ENCODE measurements at regions of chr2 and their contacts with region 1.

Region 1: GRCh38 chr2:201558665-201559064 is 84.6 kb downstream of the TMEM237 start:
- DNase-seq: no peak
- ATAC-seq: no peak
- H3K4me3 ChIP-seq: no peak overlapping the region
- H3K4me3 Mint-ChIP-seq: no peak overlapping the region
- H3K27ac ChIP-seq: no peak overlapping the region
- H3K27ac Mint-ChIP-seq: no peak overlapping the region
- H3K4me1 ChIP-seq: no peaks in the 10 kb centered on the region
- H3K4me1 Mint-ChIP-seq: no peaks in the 10 kb centered on the region
- H3K27me3 ChIP-seq: no peaks in the 10 kb centered on the region
- H3K27me3 Mint-ChIP-seq: no peaks in the 10 kb centered on the region
- CTCF ChIP-seq: no peak

Region 2: DNA sequence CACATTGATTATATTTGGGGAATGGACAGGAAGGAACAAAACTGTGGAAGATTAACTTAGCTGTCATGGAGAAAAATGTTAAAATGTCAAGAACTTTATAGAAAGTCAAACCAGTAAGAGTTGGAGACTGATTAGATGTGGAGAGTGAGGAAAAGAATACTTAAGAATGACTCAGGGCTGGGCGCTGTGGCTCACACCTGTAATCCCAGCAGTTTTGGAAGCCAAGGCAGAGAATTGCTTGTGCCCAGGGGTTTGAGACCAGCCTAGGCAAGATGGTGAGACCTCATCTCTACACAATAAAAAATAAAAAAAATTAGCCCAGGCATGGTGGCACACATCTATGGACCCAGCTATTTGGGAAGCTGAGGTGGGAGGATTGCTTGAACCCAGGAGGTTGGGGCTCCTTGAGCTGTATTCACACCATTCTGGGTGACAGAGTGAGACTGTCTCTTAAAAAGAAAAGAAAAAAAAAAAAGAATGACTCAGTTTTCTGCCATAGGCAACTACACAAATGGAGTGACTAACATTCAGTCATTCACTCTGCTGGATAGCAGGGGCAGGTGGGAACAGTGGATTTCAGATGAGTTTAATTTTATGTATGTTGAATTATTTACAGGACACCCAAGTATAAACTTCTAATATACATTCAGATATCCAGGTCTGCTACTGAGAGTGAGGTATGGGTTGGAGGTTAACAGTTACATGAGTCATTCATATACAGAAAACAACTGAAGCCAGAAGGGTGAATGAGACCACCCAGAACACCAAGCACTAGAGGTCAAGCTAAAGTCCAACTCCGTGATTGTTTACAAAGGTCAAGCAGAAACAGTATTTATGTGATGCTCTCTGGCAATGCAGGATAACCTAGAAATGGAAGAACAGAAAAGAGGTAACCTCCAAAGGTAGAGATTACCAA is 629.1 kb before region 1 on chr2:
- CTCF ChIA-PET with region 1: no interaction called
- POLR2A ChIA-PET with region 1: no interaction called
- intact Hi-C with region 1: no loop called
- DNase-seq: no peak
- ATAC-seq: no peak
- H3K4me3 ChIP-seq: no peak overlapping the region
- H3K4me3 Mint-ChIP-seq: no peak overlapping the region
- H3K27ac ChIP-seq: no peak overlapping the region
- H3K27ac Mint-ChIP-seq: no peak overlapping the region
- H3K4me1 ChIP-seq: no peaks in the 10 kb centered on the region
- H3K4me1 Mint-ChIP-seq: no peaks in the 10 kb centered on the region
- H3K27me3 ChIP-seq: no peaks in the 10 kb centered on the region
- H3K27me3 Mint-ChIP-seq: no peaks in the 10 kb centered on the region
- CTCF ChIP-seq: no peak

Region 3: DNA sequence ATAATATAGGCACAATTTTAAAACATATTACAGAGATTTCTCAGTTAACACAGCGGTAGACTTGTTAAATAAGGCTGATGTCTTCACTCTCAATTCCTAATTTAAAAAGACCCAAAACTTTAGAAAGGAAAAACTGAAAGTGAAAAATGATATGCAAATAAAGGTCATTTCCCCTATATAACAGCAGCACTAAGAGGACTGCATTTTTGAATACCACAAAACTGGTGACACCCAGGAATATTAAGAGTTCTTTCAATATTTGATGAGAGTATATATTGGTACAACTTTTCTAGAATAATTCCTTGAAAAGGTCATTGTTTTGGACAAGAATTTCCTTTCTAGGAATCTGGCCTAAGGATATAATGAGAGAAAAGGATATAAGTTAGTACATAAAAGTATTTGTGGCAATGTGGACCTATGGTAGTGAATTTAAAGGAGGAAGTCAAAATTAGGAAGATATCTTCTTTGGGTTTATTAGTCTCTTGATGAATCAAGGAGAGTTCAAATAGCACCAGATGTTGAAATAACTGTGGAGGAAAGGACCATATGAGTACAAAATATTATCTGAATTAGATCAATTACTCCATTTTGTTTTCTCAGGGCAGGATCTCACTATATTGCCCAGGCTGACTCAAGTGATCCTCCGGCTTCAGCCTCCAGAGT is 14.3 kb after region 1 on chr2:
- CTCF ChIA-PET with region 1: no interaction called
- POLR2A ChIA-PET with region 1: no interaction called
- intact Hi-C with region 1: loop called in 1 of 2 experiments (anchors 1 kb)
- DNase-seq: no peak
- ATAC-seq: no peak
- H3K4me3 ChIP-seq: no peak overlapping the region
- H3K4me3 Mint-ChIP-seq: no peak overlapping the region
- H3K27ac ChIP-seq: no peak overlapping the region
- H3K27ac Mint-ChIP-seq: no peak overlapping the region
- H3K4me1 ChIP-seq: no peaks in the 10 kb centered on the region
- H3K4me1 Mint-ChIP-seq: no peaks in the 10 kb centered on the region
- H3K27me3 ChIP-seq: no peaks in the 10 kb centered on the region
- H3K27me3 Mint-ChIP-seq: no peaks in the 10 kb centered on the region
- CTCF ChIP-seq: no peak

Measured in CD4-positive, alpha-beta T cell (primary cell).